Activated T-helper 1 cell treated with anti-CD3 and anti-CD28 coated beads, Interleukin-12 subunit alpha, Interleukin-12 subunit beta, Interleukin-2, Interleukin-4 antibody, amounts not matched to agents 30 ng/mL and 10 ng/mL and 1 ng/mL, durations not matched to agents 14 hours and 24 hours and 36 hours (primary cell): ENCODE measurements at regions of chr6 and their contacts with region 1.

Region 1: GRCh38 chr6:157379656-157380454 is 1.1 kb upstream of the ZDHHC14 start:
- DNase-seq: peak; percentile 86
- H3K4me3 Mint-ChIP-seq: peak overlapping the region; percentile 88
- H3K27ac Mint-ChIP-seq: peak overlapping the region; percentile 83
- H3K4me1 Mint-ChIP-seq: peaks cover 39% of the 10 kb centered on the region
- H3K27me3 Mint-ChIP-seq: peaks cover 6% of the 10 kb centered on the region

Region 2: GRCh38 chr6:157368359-157369049 is 11.4 kb before region 1 on chr6:
- intact Hi-C with region 1: loop called (anchors 1 kb)
- DNase-seq: no peak
- H3K4me3 Mint-ChIP-seq: no peak overlapping the region
- H3K27ac Mint-ChIP-seq: peak overlapping the region; percentile 52
- H3K4me1 Mint-ChIP-seq: peaks cover 20% of the 10 kb centered on the region
- H3K27me3 Mint-ChIP-seq: peaks cover 46% of the 10 kb centered on the region

Region 3: DNA sequence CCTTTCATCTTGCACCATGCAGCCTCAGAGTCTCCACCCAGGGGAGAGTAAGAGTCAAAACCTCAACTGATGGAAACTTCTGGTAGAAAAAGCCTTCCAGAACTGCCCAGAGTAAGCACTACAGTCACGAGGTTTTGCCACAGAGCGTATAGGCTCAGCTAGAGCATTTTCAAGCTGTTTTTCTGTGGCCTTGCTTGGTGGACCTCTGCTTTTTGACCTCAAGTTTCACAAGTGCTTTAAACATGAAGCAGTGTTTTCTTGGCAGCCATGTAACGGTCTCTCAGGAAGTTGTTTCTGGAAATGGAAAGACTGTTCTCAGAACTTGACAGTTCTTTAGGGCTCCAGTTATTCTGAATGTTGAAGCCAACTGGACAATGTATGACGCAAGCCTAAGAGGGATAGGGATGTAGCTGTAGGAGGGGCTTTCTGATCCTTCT is 147.6 kb after region 1 on chr6:
- intact Hi-C with region 1: loop called (anchors 2 kb)
- DNase-seq: peak; percentile 56
- H3K4me3 Mint-ChIP-seq: peak overlapping the region; percentile 23
- H3K27ac Mint-ChIP-seq: peak overlapping the region; percentile 64
- H3K4me1 Mint-ChIP-seq: peaks cover 40% of the 10 kb centered on the region
- H3K27me3 Mint-ChIP-seq: peaks cover 6% of the 10 kb centered on the region

Region 4: GRCh38 chr6:157597446-157598312 is 217.8 kb after region 1 on chr6:
- intact Hi-C with region 1: loop called (anchors 2 kb)
- DNase-seq: no peak
- H3K4me3 Mint-ChIP-seq: no peak overlapping the region
- H3K27ac Mint-ChIP-seq: no peak overlapping the region
- H3K4me1 Mint-ChIP-seq: peaks cover 12% of the 10 kb centered on the region
- H3K27me3 Mint-ChIP-seq: no peaks in the 10 kb centered on the region

Region 5: GRCh38 chr6:157946865-157947532 is 567.1 kb after region 1 on chr6:
- intact Hi-C with region 1: loop called (anchors 10 kb)
- DNase-seq: no peak
- H3K4me3 Mint-ChIP-seq: no peak overlapping the region
- H3K27ac Mint-ChIP-seq: peak overlapping the region; percentile 24
- H3K4me1 Mint-ChIP-seq: peaks cover 32% of the 10 kb centered on the region
- H3K27me3 Mint-ChIP-seq: peaks cover 9% of the 10 kb centered on the region